PC-3 (cell line): ENCODE measurements at regions of chr11 and their contacts with region 1.

Region 1: DNA sequence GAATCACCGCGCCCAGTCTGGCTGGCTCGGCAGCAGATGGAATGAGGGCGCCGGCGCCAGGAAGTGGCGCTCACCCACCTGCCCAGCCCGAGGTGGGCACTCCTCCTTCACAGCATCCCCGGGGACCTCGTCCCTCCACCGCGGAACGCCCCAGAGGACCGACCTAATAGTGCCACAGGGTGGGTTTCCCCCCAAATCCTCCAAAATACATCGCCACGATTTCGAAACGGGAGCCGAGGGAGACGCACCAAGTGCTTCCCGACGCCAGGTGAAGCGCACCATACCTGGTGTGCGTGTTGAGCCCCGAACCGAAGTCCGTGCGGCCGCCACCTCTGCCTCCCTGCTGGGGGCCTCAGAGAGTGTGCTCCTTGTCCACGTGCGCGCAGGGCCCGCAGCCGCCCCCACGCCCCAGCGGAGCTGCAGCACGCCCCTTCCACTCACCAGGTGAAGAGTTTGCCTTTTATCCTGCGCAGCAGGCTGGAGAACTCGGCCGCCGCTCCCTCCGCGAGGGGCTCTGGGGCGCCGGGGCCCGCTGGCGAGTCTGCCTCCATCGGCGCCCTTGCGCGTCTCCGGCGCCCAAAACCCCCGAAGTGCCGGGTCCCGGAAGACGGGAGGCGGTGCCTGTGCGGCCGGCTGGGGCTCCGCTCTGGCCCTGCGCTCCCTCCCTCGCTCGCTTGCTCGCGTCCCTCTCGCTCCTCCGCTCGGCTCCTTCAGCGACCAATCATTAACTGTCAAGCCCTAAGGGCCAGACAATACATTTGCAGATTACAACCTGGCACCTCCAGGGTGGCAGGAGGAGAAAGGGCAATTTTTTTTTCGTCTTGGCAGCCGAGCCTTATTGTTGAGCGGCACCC is at the start of gene SLC35F2:
- DNase-seq: peak; percentile 96
- ATAC-seq: peak; percentile 70
- H3K4me3 ChIP-seq: peak within 1 kb of the TSS; percentile 81
- H3K27ac ChIP-seq: peak within 1 kb of the TSS; percentile 60
- H3K4me1 ChIP-seq: peaks cover 20% of the 10 kb centered on the region
- H3K27me3 ChIP-seq: no peaks in the 10 kb centered on the region
- CTCF ChIP-seq: peak; percentile 7; the same call in 1 of the 2 replicates
- total RNA-seq, gene SLC35F2: 190 and 210 TPM in 2 replicates

Region 2: GRCh38 chr11:107651672-107652071 is 206.8 kb before region 1 on chr11:
- CTCF ChIA-PET with region 1: no interaction called
- POLR2A ChIA-PET with region 1: no interaction called
- intact Hi-C with region 1: no loop called
- DNase-seq: peak; percentile 29
- ATAC-seq: no peak; the same call in 1 of the 2 replicates
- H3K4me3 ChIP-seq: no peak overlapping the region
- H3K27ac ChIP-seq: no peak overlapping the region
- H3K4me1 ChIP-seq: no peaks in the 10 kb centered on the region
- H3K27me3 ChIP-seq: peaks cover 92% of the 10 kb centered on the region
- CTCF ChIP-seq: peak; percentile 30; the same call in 1 of the 2 replicates

Region 3: DNA sequence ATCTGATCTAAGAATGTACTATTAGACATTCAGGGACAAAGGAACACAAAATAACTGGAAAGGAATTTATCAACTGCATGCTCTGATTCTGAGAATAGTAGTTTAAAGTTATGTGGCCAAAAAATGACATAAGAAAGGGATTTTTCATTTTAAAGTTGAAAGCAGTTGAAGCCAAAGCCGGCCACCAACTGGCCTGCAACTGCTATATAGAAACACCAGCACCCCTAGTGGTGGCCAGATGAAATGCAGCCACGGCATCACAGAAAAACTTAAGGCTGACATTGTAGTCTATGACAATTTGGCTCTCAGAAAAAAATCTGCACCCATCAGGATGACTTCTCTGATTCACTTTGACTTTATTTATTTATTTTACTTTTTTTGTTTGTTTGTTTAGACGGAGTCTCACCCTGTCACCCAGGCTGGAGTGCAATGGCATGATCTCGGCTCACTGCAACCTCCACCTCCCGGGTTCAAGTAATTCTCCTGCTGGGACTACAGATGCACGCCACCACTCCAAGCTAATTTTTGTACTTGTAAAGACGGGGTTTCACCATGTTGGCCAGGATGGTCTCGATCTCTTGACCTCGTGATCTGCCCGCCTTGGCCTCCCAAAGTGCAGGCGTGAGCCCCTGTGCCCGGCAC is 59.1 kb before region 1 on chr11:
- CTCF ChIA-PET with region 1: interaction called, 3 read pairs
- POLR2A ChIA-PET with region 1: no interaction called
- intact Hi-C with region 1: loop called (anchors 1 kb)
- DNase-seq: peak; percentile 94
- ATAC-seq: peak; percentile 80
- H3K4me3 ChIP-seq: no peak overlapping the region
- H3K27ac ChIP-seq: no peak overlapping the region
- H3K4me1 ChIP-seq: no peaks in the 10 kb centered on the region
- H3K27me3 ChIP-seq: no peaks in the 10 kb centered on the region
- CTCF ChIP-seq: peak; percentile 98

Region 4: DNA sequence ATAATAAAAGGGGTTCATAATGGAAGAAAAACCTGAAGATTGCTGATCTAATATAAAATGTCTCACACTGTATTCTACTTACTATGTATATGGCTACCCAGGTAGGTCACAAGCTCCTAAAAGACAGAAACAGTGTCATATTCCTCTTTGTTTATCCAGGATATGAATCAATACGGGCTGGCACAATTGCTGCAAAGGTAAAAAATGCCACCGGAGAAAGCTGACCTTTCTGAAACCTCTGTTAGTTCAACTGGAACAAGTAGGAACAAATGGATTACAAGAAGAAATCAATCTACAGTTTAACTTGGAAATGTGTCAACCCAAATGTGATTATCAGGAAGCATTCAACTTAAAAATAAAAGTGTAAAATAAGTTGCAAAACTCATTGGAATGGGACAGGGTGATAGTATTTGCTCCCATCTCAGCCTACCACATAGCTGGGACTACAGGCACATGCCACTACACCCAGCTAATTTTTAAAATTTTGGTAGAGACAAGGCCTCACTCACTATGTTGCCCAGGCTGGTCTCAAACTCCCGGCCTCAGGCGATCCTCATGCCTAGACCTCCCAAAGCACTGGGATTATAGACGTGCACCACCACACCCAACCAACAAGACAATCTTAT is 27.4 kb before region 1 on chr11:
- CTCF ChIA-PET with region 1: no interaction called
- POLR2A ChIA-PET with region 1: no interaction called
- intact Hi-C with region 1: loop called (anchors 1 kb)
- DNase-seq: peak; percentile 97
- ATAC-seq: peak; percentile 95
- H3K4me3 ChIP-seq: peak overlapping the region; percentile 17; the same call in 1 of the 2 replicates
- H3K27ac ChIP-seq: peak overlapping the region; percentile 73
- H3K4me1 ChIP-seq: peaks cover 39% of the 10 kb centered on the region
- H3K27me3 ChIP-seq: no peaks in the 10 kb centered on the region
- CTCF ChIP-seq: no peak

Region 5: DNA sequence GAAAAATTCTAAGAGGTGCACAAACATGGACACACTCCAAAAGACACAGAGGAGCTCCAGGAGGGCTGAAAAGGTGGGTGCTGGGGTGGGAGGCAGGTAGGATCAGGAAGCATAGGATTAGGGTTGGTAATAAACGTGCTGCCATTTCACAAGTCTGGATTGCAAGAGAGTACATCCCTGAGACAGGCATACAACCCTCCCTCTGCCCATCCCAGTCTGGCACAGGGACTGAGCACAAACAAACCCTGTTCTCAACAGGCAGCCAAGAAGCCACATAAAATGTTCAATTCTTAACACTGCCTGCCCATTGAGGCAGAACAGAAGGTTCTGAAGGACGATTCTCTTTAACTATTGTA is 18.3 kb before region 1 on chr11:
- CTCF ChIA-PET with region 1: no interaction called
- POLR2A ChIA-PET with region 1: interaction called, 4 read pairs
- intact Hi-C with region 1: loop called (anchors 1 kb)
- DNase-seq: no peak
- ATAC-seq: peak; percentile 41
- H3K4me3 ChIP-seq: peak overlapping the region; percentile 41
- H3K27ac ChIP-seq: peak overlapping the region; percentile 76
- H3K4me1 ChIP-seq: peaks cover 66% of the 10 kb centered on the region
- H3K27me3 ChIP-seq: no peaks in the 10 kb centered on the region
- CTCF ChIP-seq: no peak

Region 6: DNA sequence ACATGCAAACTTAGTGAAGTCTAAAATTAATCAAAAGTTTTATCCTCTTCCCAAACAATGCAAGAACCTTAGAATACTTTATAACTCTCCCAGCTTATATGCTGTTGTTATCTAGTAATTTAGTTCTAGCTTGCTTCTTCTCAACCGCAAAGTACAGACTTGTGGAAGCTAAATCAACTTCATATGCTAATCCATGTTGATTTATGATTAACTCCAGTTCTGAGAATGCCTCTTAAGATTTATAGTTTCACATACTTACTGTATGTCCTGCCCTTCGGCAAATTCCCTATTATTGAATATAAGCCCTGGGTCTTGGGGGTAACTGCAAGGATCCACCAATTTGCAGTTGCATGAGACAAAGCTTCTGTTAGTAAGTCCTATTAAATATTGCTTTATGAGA is 17.7 kb after region 1 on chr11:
- CTCF ChIA-PET with region 1: no interaction called
- POLR2A ChIA-PET with region 1: no interaction called
- intact Hi-C with region 1: no loop called
- DNase-seq: no peak
- ATAC-seq: no peak
- H3K4me3 ChIP-seq: no peak overlapping the region
- H3K27ac ChIP-seq: no peak overlapping the region
- H3K4me1 ChIP-seq: no peaks in the 10 kb centered on the region
- H3K27me3 ChIP-seq: no peaks in the 10 kb centered on the region
- CTCF ChIP-seq: no peak

Region 7: GRCh38 chr11:107928046-107928766 is 69.8 kb after region 1 on chr11 and contains the start of gene RAB39A:
- CTCF ChIA-PET with region 1: no interaction called
- POLR2A ChIA-PET with region 1: no interaction called
- intact Hi-C with region 1: loop called (anchors 2 kb)
- DNase-seq: peak; percentile 92
- ATAC-seq: peak; percentile 81
- H3K4me3 ChIP-seq: peak within 1 kb of the TSS; percentile 1; the same call in 1 of the 2 replicates
- H3K27ac ChIP-seq: no peak within 1 kb of the TSS
- H3K4me1 ChIP-seq: peaks cover 17% of the 10 kb centered on the region
- H3K27me3 ChIP-seq: peaks cover 29% of the 10 kb centered on the region
- CTCF ChIP-seq: no peak
- total RNA-seq, gene RAB39A: not detected in 2 replicates